HEK293 (cell line): ENCODE measurements at regions of chr19 and their contacts with region 1.

Region 1: DNA sequence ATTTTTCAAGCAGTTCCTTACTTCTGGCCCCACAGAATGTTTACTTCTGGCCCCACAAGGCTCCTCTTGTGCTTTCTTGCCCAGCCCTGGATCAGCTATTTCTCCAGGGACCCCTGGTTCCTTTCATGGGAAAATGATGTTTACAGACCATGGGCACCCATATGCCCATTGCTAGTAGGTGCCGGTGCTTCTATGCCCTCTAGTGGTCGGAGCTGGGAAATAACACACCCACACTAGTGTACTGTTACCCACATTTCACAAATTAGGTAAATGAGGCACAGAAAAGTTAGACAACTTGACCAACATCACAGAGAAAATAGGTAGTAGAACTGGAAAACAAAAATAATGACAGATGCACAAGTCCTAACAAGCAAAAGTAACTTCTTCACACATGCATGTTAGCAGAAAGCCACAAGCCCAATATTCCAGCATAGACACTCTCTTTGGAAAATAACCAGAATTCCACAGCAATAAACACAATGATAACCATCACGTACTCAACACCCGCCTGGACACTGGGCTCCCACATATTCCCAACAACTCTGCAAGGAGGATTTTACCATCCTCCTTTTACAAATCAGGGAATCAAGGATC is 1.3 kb upstream of the CEACAM6 start:
- H3K4me3 ChIP-seq: no peak overlapping the region
- H3K27ac ChIP-seq: no peak overlapping the region
- H3K4me1 ChIP-seq: peaks cover 6% of the 10 kb centered on the region; the same call in 1 of the 2 replicates
- CTCF ChIP-seq: peak; percentile 37; the same call in 1 of the 2 replicates

Region 2: DNA sequence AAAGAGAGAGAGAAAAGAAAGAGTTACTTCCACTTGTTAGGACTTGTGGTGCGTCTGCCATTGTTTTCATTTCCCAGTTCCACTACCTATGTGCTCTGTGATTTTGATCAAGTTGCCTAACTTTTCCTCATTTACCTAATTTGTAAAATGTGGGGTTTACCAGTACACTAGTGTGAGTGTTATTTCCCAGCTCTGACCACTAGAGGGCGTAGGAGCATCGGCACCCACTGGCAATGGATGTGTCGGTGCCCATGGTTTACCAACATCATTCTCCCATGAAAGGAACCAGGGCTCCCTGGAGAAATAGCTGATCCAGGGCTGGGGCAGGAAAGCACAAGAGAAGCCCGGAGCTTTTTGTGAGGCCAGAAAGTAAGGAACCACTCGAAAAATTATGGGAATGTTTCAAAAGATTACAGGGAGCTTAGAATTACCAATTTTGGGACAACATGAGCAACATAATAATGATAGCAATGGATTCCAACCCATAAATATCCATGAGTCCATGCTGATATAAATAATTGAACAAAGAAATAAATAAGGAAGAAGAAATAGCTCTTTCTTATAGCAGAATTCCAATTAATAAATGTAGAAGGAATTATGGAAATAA is 112.1 kb before region 1 on chr19:
- CTCF ChIA-PET with region 1: interaction called, 30 read pairs
- POLR2A ChIA-PET with region 1: no interaction called
- H3K4me3 ChIP-seq: no peak overlapping the region
- H3K27ac ChIP-seq: no peak overlapping the region
- H3K4me1 ChIP-seq: no peaks in the 10 kb centered on the region
- CTCF ChIP-seq: peak; percentile 75

Region 3: GRCh38 chr19:41726493-41726892 is 27.5 kb before region 1 on chr19:
- CTCF ChIA-PET with region 1: interaction called, 43 read pairs
- POLR2A ChIA-PET with region 1: no interaction called
- H3K4me3 ChIP-seq: no peak overlapping the region
- H3K27ac ChIP-seq: no peak overlapping the region
- H3K4me1 ChIP-seq: no peaks in the 10 kb centered on the region
- CTCF ChIP-seq: no peak

Region 4: DNA sequence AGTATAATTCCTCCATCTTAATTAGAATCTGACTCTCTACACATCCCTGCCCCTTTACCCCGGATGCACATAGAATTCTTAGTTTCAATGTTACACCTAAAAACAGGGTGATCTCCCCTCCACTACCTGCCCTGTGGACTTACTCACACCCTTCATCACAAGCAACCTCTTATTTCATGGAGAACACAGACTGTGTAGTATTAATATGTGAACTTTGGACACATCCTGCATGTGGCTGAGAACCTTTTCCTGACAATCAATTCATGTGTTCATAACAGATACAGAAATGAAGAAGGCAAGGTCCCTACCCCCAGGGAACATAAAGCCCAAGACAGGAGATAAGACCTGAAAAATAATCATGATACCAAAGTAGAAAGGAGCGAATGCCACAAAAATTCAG is 13.1 kb after region 1 on chr19:
- CTCF ChIA-PET with region 1: interaction called, 77 read pairs
- POLR2A ChIA-PET with region 1: no interaction called
- H3K4me3 ChIP-seq: no peak overlapping the region
- H3K27ac ChIP-seq: no peak overlapping the region
- H3K4me1 ChIP-seq: no peaks in the 10 kb centered on the region
- CTCF ChIP-seq: no peak

Region 5: DNA sequence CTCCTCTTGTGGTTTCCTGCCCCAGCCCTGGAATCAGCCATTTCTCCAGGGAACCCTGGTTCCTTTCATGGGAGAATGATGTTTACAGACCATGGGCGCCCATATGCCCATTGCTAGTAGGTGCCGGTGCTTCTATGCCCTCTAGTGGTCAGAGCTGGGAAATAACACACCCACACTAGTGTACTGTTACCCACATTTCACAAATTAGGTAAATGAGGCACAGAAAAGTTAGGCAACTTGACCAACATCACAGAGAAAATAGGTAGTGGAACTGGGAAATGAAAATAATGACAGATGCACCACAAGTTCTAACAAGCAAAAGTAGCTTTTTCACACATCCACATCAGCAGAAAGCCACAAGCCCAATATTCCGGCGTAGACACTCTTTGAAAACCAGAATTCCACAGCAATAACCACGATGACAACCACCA is 41.0 kb after region 1 on chr19:
- CTCF ChIA-PET with region 1: interaction called, 180 read pairs
- POLR2A ChIA-PET with region 1: no interaction called
- H3K4me3 ChIP-seq: no peak overlapping the region
- H3K27ac ChIP-seq: no peak overlapping the region
- H3K4me1 ChIP-seq: no peaks in the 10 kb centered on the region
- CTCF ChIP-seq: peak; percentile 79

Region 6: GRCh38 chr19:41821003-41821735 is 67.1 kb after region 1 on chr19:
- CTCF ChIA-PET with region 1: interaction called, 106 read pairs
- POLR2A ChIA-PET with region 1: interaction called, 3 read pairs
- H3K4me3 ChIP-seq: no peak overlapping the region
- H3K27ac ChIP-seq: no peak overlapping the region
- H3K4me1 ChIP-seq: no peaks in the 10 kb centered on the region
- CTCF ChIP-seq: peak; percentile 86